ENCODE measurements at regions of chr11 and their contacts with region 1.

Region 1: DNA sequence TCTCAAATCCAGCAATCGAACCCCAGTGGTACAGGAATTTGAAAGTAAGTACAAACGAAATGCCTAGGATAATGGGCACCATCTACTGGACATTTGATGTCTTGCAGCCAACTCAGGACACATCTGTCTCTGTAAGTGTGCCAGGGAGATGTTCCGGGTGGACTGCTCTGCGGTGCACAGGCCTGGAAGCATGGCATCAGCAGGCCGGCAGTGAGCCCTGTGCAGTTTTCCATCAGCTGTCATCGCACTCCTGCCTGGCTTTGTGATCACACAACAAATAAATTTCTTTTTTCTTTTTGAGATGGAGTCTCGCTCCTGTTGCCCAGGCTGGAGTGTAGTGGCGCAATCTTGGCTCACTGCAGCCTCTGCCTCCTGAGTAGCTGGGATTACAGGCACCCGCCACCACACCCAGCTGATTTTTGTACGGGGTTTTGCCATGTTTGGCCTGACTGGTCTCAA is 71.0 kb downstream of the JAM3 start:
- DNase-seq: peak; percentile 75
- H3K4me3 Mint-ChIP-seq: no peak overlapping the region
- H3K27ac Mint-ChIP-seq: no peak overlapping the region
- H3K4me1 Mint-ChIP-seq: peaks cover 3% of the 10 kb centered on the region
- H3K27me3 Mint-ChIP-seq: peaks cover 20% of the 10 kb centered on the region
- CTCF ChIP-seq: peak; percentile 85

Region 2: GRCh38 chr11:134062265-134063123 is 77.4 kb before region 1 on chr11:
- CTCF ChIA-PET with region 1: interaction called, 18 read pairs
- POLR2A ChIA-PET with region 1: no interaction called
- intact Hi-C with region 1: no loop called
- DNase-seq: no peak
- H3K4me3 Mint-ChIP-seq: no peak overlapping the region
- H3K27ac Mint-ChIP-seq: no peak overlapping the region
- H3K4me1 Mint-ChIP-seq: no peaks in the 10 kb centered on the region
- H3K27me3 Mint-ChIP-seq: peaks cover 17% of the 10 kb centered on the region
- CTCF ChIP-seq: no peak

Region 3: DNA sequence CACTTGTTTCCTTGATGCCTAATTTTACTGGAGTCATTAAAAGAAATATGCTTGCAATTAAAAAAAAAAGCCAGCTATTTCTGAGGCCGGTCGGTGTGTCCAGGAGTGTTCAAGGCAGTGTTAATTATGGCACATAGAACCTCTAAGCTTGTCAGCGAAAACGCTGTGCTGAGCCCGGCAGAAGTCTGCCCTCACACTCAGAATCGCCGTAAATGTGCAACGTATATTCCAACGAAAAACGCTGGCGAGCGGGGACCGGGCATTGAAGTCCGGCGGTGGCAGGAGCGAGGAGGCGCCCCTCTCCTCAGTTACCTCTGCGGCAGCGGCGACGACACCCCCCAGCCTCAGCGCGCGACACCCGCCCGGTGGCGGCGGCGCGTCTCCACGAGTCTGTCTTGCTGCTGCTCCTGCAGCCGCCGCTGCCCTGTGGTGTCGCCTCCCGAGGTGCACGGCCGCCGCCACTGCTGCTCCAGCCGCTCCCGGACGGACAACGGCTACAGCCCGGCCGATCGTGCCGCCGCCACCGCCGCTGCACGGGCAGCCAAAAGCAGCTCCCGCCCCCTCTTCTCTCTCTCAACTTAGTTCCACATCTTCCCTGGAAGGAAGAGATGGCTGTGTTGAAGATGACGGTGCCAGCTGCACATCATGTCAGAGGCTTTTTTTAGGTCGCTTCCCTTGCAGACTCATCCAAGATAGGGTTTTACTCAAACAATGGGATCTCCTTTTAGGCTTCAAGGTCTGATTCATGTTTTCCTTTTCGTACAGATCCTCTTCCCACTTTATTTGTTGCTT is 15.0 kb before region 1 on chr11:
- CTCF ChIA-PET with region 1: interaction called, 12 read pairs
- POLR2A ChIA-PET with region 1: interaction called, 3 read pairs
- intact Hi-C with region 1: no loop called
- DNase-seq: no peak
- H3K4me3 Mint-ChIP-seq: peak overlapping the region; percentile 25
- H3K27ac Mint-ChIP-seq: no peak overlapping the region
- H3K4me1 Mint-ChIP-seq: peaks cover 16% of the 10 kb centered on the region
- H3K27me3 Mint-ChIP-seq: peaks cover 12% of the 10 kb centered on the region
- CTCF ChIP-seq: no peak

Region 4: DNA sequence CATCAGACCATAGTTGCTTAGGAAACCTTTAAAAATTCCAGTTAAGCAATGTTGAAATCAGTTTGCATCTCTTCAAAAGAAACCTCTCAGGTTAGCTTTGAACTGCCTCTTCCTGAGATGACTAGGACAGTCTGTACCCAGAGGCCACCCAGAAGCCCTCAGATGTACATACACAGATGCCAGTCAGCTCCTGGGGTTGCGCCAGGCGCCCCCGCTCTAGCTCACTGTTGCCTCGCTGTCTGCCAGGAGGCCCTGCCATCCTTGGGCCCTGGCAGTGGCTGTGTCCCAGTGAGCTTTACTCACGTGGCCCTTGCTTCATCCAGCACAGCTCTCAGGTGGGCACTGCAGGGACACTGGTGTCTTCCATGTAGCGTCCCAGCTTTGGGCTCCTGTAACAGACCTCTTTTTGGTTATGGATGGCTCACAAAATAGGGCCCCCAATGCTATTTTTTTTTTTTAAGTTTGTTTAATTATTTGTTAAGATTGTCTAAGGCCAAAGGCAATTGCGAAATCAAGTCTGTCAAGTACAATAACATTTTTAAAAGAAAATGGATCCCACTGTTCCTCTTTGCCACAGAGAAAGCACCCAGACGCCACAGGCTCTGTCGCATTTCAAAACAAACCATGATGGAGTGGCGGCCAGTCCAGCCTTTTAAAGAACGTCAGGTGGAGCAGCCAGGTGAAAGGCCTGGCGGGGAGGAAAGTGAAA is 10.4 kb after region 1 on chr11:
- CTCF ChIA-PET with region 1: interaction called, 10 read pairs
- POLR2A ChIA-PET with region 1: no interaction called
- intact Hi-C with region 1: no loop called
- DNase-seq: no peak
- H3K4me3 Mint-ChIP-seq: no peak overlapping the region
- H3K27ac Mint-ChIP-seq: no peak overlapping the region
- H3K4me1 Mint-ChIP-seq: no peaks in the 10 kb centered on the region
- H3K27me3 Mint-ChIP-seq: no peaks in the 10 kb centered on the region
- CTCF ChIP-seq: no peak